Common myeloid progenitor, CD34-positive (primary cell): ENCODE measurements at regions of chr2 and their contacts with region 1.

Region 1: DNA sequence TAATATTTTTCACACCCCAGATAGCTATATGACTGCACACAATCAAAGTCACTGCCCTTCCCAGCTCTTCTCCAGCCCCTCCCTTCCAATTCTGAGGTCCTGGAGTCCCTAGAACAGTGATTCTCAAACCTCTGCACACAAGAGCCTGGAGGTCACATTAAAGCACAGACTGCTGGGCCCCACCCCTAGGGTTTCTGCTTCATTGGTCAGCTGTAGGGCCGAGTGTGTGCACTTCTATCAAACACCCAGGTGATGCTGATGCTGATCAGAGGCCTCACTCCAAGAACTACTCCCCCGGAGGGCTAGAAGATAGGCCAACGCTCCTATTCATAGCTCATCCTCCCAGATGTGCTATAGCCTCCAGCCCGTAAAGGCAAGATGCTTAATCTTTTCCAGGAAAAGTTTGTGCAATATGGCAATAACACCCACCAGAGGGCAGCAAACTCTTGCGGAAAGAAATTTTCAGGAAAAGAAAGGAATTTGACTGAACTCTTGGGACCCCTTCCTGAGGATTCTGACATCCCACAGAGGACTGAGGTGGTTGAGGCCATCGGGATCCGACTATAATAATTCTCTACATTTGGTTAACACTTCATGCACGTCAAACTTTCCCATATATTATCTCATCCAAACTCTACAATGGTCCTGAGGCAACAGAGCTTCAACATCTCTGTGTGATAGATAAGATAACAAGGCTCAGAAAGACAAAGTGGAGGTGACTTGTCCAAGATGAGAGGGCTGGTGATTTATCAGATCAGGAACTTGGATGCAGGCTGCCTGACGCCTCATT is 194.2 kb upstream of the PKDCC start:
- DNase-seq: peak; percentile 9 to 21 (median 14)
- H3K4me3 ChIP-seq: no peak overlapping the region
- H3K27ac ChIP-seq: no peak overlapping the region
- H3K4me1 ChIP-seq: no peaks in the 10 kb centered on the region
- H3K27me3 ChIP-seq: peaks cover 2 to 9% (median 3%) of the 10 kb centered on the region in 5 experiments

Region 2: GRCh38 chr2:41806286-41806685 is 47.3 kb before region 1 on chr2:
- CTCF ChIA-PET with region 1: no interaction called
- POLR2A ChIA-PET with region 1: no interaction called
- DNase-seq: no peak
- H3K4me3 ChIP-seq: no peak overlapping the region
- H3K27ac ChIP-seq: no peak overlapping the region
- H3K4me1 ChIP-seq: no peaks in the 10 kb centered on the region
- H3K27me3 ChIP-seq: no peaks in the 10 kb centered on the region

Region 3: GRCh38 chr2:41840702-41841551 is 12.7 kb before region 1 on chr2:
- CTCF ChIA-PET with region 1: interaction called, 28 read pairs
- POLR2A ChIA-PET with region 1: no interaction called
- DNase-seq: peak; percentile 94 to 97 (median 96)
- H3K4me3 ChIP-seq: peak overlapping the region; percentile 61 to 85 (median 74)
- H3K27ac ChIP-seq: peak overlapping the region in 1 of 2 experiments; percentile 38
- H3K4me1 ChIP-seq: peaks cover 2 to 14% (median 10%) of the 10 kb centered on the region in 4 experiments
- H3K27me3 ChIP-seq: peaks cover 0 to 19% (median 5%) of the 10 kb centered on the region in 5 experiments

Region 4: GRCh38 chr2:41869542-41870264 is 16.1 kb after region 1 on chr2:
- CTCF ChIA-PET with region 1: interaction called, 13 read pairs
- POLR2A ChIA-PET with region 1: interaction called, 4 read pairs
- DNase-seq: peak; percentile 47 to 76 (median 66)
- H3K4me3 ChIP-seq: no peak overlapping the region
- H3K27ac ChIP-seq: no peak overlapping the region
- H3K4me1 ChIP-seq: no peaks in the 10 kb centered on the region
- H3K27me3 ChIP-seq: peaks cover 0 to 6% (median 0%) of the 10 kb centered on the region in 5 experiments